ENCODE measurements at regions of chr5 and their contacts with region 1.

Region 1: DNA sequence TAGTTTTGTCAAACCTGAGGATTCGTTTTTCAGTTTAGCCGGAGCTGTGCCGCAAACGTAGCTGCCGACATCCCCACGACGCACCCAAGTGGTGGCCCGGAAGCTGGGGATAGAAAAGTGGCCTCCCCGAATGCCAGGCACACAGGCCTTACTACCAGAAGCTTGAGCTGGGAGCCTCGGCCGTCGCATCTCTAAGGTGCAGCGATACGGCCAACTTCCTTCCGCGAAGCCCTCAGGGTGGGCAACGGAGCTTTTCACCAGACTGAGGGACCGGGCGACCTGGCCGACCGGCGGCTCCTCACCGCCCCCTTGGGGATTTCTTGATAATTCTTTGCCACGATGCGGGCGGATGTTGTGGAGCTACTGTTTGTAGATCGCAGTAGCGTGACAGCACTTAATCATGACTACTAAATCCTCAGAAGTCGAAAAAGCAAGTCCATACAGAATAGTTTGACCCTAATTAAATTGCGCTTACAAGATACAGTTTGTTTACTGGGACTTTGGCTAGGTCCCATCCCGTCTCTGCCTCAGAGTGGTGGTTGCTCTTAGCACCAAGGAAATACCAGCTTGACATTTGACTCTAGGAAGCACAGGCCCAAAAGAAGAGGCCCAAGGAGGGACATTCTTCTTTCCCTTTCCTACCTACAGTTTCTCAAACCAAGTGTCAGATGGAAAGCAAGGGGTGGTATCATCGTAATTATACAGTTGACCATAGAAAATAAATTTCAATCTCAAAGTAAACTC is 613 bp upstream of the TMEM267 start:
- DNase-seq: peak; percentile 89
- H3K4me3 ChIP-seq: peak overlapping the region; percentile 96
- H3K27ac ChIP-seq: peak overlapping the region; percentile 96
- H3K4me1 ChIP-seq: peaks cover 7% of the 10 kb centered on the region
- H3K27me3 ChIP-seq: no peaks in the 10 kb centered on the region
- CTCF ChIP-seq: peak; percentile 73

Region 2: GRCh38 chr5:43110606-43111442 is 373.5 kb before region 1 on chr5:
- intact Hi-C with region 1: loop called (anchors 10 kb)
- DNase-seq: peak; percentile 54
- H3K4me3 ChIP-seq: no peak overlapping the region
- H3K27ac ChIP-seq: no peak overlapping the region
- H3K4me1 ChIP-seq: no peaks in the 10 kb centered on the region
- H3K27me3 ChIP-seq: no peaks in the 10 kb centered on the region
- CTCF ChIP-seq: peak; percentile 30

Region 3: DNA sequence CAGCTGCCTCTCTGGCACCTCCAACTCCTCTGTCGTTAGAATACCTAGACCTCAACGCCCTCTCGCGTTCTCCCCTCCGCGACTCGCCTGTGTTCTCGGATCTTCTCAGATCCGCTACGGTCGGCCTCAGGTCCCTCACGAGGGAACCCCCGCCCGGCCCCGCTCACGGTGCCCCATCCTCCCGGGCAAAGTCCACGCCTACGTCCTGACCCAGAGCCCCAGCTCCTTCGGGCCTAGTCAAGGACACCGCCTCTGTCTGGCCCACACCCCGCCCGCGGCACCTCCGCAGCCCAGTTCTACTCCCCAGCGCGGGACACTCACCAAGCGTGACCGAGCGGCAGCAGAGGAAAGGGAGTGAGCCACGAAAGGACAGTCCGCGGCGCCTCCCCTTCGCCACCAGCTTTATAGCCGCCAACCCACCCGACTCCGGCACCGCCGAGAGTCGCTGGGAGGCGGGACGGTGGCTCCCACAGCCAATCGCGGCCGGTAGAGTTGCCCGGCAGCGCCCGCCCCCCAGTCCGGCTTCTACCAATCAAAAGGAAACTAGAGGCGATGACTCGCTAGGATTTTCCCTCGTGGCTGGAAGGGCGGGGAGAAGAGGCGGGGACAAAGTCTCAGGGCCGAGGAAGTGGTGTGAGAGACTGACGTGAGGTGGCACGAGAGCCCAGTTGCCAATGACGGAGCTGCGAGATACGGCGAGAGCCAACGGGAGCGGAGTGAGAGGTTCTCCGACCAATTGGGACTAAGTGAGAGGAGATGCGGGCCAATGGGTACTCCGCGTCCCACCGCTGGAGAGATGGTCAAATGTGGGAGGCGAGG is 171.0 kb before region 1 on chr5 and contains the start of gene HMGCS1:
- intact Hi-C with region 1: loop called (anchors 5 kb)
- DNase-seq: peak; percentile 99
- H3K4me3 ChIP-seq: peak within 1 kb of the TSS; percentile 77
- H3K27ac ChIP-seq: peak within 1 kb of the TSS; percentile 84
- H3K4me1 ChIP-seq: peaks cover 5% of the 10 kb centered on the region
- H3K27me3 ChIP-seq: no peaks in the 10 kb centered on the region
- CTCF ChIP-seq: no peak
- total RNA-seq, gene HMGCS1: 95.1 to 498 TPM

Region 4: GRCh38 chr5:43556857-43557542 is 72.7 kb after region 1 on chr5 and contains the start of gene PAIP1:
- intact Hi-C with region 1: loop called (anchors 10 kb)
- DNase-seq: peak; percentile 79
- H3K4me3 ChIP-seq: peak within 1 kb of the TSS; percentile 78
- H3K27ac ChIP-seq: peak within 1 kb of the TSS; percentile 99
- H3K4me1 ChIP-seq: peaks cover 15% of the 10 kb centered on the region
- H3K27me3 ChIP-seq: no peaks in the 10 kb centered on the region
- CTCF ChIP-seq: peak; percentile 70
- total RNA-seq, gene PAIP1: 53.1 to 65.6 TPM

Region 5: DNA sequence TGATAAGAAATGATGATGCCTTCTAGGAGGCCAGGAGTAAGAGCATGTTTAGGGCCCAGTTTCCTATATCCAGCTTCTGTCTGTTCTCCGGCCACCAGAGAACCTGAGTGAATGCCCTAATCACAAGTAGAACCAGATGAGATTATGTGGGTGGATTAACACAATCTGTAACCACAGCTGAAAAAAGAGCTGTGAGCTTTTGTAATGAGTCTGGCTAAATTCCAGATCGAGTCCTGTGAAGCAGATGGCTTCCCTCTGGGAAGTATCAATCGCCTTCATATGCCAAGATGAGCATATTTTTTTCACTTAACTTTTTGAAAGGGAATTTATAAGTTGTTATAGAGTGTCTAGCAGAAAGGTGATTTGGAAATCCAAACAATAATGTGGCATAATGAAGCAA is 218.5 kb after region 1 on chr5:
- intact Hi-C with region 1: no loop called
- DNase-seq: no peak
- H3K4me3 ChIP-seq: no peak overlapping the region
- H3K27ac ChIP-seq: no peak overlapping the region
- H3K4me1 ChIP-seq: no peaks in the 10 kb centered on the region
- H3K27me3 ChIP-seq: no peaks in the 10 kb centered on the region
- CTCF ChIP-seq: no peak

Region 6: DNA sequence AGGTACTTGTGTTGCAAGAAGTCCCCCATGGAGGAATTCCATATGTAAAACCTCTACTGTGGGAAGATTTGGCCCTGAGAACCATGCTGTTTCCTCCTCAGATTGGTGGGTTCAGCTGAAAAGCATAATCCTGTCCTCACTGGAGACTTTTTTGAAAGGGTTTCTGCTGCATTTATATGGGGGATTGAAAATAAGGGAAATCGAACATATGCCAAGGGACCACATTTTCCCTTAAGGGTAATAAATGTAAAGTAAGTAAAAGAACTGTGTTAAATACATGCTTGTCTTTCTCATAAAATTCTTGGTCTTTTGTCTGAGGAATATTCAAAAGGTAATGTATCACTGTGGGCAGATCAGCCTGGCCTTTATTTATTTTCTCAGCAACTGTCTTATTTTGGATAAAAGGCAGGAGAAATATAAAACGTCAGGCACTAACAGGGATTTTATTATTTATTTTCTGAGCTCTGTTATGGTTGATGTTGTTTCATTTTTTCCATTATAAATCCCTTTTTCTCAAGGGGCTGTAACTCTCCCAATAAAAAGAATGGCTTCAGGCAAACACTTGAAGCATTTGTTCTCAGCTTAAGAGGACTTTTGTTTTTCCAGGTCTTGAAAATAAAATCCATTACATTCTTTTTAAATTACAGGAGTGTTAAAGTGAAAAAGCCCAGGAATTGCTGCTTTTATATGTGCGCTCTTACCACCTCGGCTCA is 773.5 kb after region 1 on chr5:
- intact Hi-C with region 1: no loop called
- DNase-seq: no peak
- H3K4me3 ChIP-seq: no peak overlapping the region
- H3K27ac ChIP-seq: no peak overlapping the region
- H3K4me1 ChIP-seq: no peaks in the 10 kb centered on the region
- H3K27me3 ChIP-seq: no peaks in the 10 kb centered on the region
- CTCF ChIP-seq: no peak

Measured in colonic mucosa (tissue), 4 donors.